ENCODE measurements at regions of chr16 and their contacts with region 1.

Region 1: DNA sequence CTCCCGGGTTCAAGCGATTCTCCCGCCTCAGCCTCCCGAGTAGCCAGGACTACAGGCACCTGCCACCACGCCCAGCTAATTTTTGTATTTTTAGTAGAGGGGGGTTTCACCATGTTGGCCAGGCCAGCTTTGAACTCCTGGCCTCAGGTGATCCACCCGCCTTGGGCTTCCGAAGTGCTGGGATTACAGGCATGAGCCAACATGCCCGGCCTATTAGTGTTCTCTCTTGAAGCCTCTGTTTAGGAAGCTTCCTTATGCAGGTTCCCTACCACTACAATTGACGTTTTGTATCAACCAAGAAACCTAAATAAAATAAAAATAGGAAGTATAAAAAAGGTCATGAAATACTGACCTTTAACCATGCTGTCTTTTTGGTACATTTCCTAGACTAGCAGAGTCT is 16.0 kb downstream of the CHST5 start:
- H3K4me3 ChIP-seq: no peak overlapping the region
- H3K27ac ChIP-seq: no peak overlapping the region
- H3K4me1 ChIP-seq: no peaks in the 10 kb centered on the region
- CTCF ChIP-seq: no peak

Region 2: GRCh38 chr16:75464130-75464918 is 55.6 kb before region 1 on chr16 and contains the start of gene TMEM170A:
- CTCF ChIA-PET with region 1: interaction called, 16 read pairs
- POLR2A ChIA-PET with region 1: interaction called, 5 read pairs
- H3K4me3 ChIP-seq: peak within 1 kb of the TSS; percentile 95
- H3K27ac ChIP-seq: peak within 1 kb of the TSS; percentile 84
- H3K4me1 ChIP-seq: peaks cover 9% of the 10 kb centered on the region
- CTCF ChIP-seq: peak; percentile 100

Region 3: DNA sequence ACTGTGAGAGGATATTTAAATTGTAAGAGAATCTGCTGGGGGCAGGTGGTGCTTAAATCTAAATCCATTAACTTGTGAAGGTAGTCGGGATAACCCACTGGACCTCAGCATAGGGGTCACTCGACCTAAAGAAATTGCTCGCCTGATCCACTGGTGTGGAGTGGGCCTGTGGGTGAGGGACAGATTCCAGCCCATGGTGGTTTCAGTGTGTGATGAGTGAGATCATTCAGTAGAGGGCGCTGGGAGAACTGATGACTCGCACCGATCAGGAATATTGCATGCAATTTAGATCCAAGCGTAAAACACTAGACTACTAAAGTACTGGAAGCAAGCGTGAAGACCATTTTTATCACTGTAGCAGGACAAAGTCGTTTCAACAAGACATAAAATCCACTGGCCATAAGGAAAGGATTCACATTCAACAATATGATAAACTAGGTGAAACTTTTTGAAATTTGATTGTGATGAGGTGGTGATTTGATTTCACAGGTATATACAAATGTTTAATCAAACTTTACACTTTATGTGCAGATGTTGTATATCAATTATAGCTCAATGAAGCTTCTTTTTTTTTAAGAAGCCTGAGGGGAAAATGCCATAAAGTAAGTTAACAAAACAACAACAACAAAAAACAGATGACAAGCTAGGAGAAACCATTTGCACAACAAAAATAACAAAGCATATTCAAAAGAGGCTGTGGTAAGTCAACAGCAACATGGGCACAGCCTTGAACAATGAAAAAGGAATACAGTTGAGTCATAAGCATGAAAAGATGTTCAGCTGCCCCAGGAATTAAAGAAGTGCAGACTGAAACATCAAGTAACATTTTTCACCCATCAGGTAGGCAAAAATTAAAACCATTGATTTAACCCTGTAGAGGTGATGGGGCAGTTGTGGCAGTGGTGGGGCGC is 47.9 kb before region 1 on chr16:
- CTCF ChIA-PET with region 1: interaction called, 42 read pairs
- POLR2A ChIA-PET with region 1: interaction called, 9 read pairs
- H3K4me3 ChIP-seq: no peak overlapping the region
- H3K27ac ChIP-seq: no peak overlapping the region
- H3K4me1 ChIP-seq: no peaks in the 10 kb centered on the region
- CTCF ChIP-seq: peak; percentile 72

Region 4: DNA sequence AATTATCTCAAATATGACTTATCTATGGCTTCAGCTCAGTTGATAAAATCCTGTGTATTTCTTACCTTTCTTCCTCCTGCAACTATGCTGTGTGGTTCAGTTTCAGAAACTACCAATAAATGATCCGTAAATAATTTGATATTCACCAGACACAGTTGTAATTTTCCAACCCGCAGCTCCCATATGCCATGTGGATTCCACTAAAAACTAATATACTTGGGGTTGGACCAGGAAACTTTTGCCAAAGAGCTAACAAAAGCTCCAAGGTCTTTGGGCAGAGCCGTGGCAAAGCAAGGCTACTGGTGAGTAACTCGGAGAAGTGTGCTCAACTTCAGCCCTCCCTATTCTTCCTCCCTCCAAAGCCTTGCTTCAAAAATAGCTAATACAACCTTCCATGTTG is 22.3 kb before region 1 on chr16:
- CTCF ChIA-PET with region 1: interaction called, 20 read pairs
- POLR2A ChIA-PET with region 1: interaction called, 6 read pairs
- H3K4me3 ChIP-seq: no peak overlapping the region
- H3K27ac ChIP-seq: no peak overlapping the region
- H3K4me1 ChIP-seq: peaks cover 13% of the 10 kb centered on the region
- CTCF ChIP-seq: no peak

Region 5: DNA sequence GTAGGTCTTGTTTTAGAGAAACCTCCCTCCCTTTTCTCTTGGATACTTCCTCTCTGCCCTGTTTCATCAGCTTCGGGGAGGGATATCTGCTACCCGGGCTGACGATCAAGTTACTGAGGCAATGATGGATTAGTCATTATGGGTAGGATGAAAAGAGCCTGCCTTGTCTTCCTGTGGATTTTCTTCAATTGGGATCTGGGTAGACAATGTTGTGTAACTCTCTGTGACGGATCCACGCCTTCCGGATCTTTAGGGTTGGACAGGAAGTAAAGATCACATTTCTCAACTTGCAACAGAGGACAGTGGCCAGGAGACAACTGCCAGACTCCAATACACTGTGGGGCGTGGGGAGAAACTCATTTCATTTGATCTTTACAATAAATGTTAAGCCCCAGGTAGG is 13.3 kb before region 1 on chr16:
- CTCF ChIA-PET with region 1: interaction called, 14 read pairs
- POLR2A ChIA-PET with region 1: interaction called, 9 read pairs
- H3K4me3 ChIP-seq: no peak overlapping the region
- H3K27ac ChIP-seq: no peak overlapping the region
- H3K4me1 ChIP-seq: peaks cover 3% of the 10 kb centered on the region; the same call in 1 of the 2 replicates
- CTCF ChIP-seq: no peak

Region 6: DNA sequence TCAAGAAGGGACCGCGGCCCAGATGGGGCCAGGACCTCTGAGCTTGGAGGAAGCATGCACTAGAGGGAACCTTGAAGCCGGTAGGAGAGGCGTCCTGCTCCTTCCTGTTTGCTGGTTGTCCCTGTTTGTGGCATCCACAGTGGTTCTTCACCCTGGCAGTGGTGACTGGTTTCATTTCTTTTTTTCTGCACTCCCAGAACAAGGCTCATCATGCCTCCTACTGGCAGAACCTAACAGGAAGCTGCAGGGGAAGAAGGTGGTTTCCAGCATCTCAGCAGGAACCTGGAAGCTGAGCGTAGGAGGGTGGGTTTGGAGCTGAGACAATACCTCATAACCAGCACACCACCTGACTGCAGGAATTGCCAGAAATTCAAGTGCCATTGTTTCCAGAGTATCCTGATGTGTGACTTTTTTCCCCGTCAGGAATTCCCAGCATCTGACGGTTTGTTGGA is 30.4 kb after region 1 on chr16:
- CTCF ChIA-PET with region 1: interaction called, 23 read pairs
- POLR2A ChIA-PET with region 1: interaction called, 3 read pairs
- H3K4me3 ChIP-seq: no peak overlapping the region
- H3K27ac ChIP-seq: no peak overlapping the region
- H3K4me1 ChIP-seq: no peaks in the 10 kb centered on the region
- CTCF ChIP-seq: peak; percentile 26; the same call in 1 of the 2 replicates

Region 7: DNA sequence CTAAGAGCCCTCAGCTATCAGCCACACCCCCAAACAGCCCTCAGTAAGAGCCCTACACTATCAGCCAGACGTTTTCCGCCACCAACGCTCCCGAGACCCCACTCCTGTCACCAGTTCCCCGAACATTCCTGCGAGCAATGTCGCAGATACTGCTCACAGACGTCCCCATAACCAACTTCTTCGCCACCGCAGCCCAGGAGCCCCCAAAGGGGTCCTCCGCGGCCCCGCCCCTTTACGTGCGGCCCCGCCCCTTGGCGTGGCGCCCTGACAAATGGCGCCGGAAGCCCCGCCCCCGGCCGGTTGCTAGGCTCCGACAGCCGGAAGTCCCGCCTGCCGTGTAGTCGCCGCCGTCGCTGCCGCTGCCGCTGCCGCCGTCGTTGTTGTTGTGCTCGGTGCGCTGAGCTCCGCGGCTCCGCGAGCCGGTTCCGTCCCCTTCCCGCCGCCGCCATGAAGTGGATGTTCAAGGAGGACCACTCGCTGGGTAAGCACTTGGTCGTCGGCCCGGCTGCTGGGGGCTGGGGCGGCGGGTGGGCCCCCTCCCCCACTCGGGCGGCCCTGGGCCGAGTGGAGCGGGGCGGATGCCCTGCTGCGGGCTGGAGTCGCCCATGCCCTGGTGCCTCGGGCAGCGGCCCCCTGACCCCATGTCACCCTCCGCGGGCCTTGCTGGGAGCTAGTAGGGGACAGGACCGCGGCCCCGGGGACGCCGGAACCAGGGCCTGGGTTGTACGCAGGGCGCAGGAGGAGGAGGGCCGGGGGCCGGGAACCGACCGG is 46.3 kb after region 1 on chr16 and contains the start of gene GABARAPL2:
- CTCF ChIA-PET with region 1: interaction called, 17 read pairs
- POLR2A ChIA-PET with region 1: interaction called, 12 read pairs
- H3K4me3 ChIP-seq: peak within 1 kb of the TSS; percentile 88
- H3K27ac ChIP-seq: peak within 1 kb of the TSS; percentile 40; the same call in 1 of the 2 replicates
- H3K4me1 ChIP-seq: no peaks in the 10 kb centered on the region
- CTCF ChIP-seq: no peak